Naive thymus-derived CD4-positive, alpha-beta T cell (primary cell): ENCODE measurements at regions of chr19 and their contacts with region 1.

Region 1: GRCh38 chr19:4638828-4639530 is at the start of gene TNFAIP8L1:
- DNase-seq: peak; percentile 97 to 100 (median 99)
- ATAC-seq: peak; percentile 97
- H3K4me3 ChIP-seq: peak within 1 kb of the TSS; percentile 81
- H3K4me3 Mint-ChIP-seq: peak within 1 kb of the TSS; percentile 90 to 99 (median 96)
- H3K27ac ChIP-seq: peak within 1 kb of the TSS; percentile 92
- H3K27ac Mint-ChIP-seq: peak within 1 kb of the TSS; percentile 92 to 99 (median 97)
- H3K4me1 ChIP-seq: peaks cover 27 to 32% of the 10 kb centered on the region in 2 donors
- H3K4me1 Mint-ChIP-seq: peaks cover 15 to 43% (median 32%) of the 10 kb centered on the region in 7 donors
- H3K27me3 ChIP-seq: no peaks in the 10 kb centered on the region
- H3K27me3 Mint-ChIP-seq: no peaks in the 10 kb centered on the region
- total RNA-seq, gene TNFAIP8L1: 11.2 to 22.4 (median 20.6) TPM

Region 2: DNA sequence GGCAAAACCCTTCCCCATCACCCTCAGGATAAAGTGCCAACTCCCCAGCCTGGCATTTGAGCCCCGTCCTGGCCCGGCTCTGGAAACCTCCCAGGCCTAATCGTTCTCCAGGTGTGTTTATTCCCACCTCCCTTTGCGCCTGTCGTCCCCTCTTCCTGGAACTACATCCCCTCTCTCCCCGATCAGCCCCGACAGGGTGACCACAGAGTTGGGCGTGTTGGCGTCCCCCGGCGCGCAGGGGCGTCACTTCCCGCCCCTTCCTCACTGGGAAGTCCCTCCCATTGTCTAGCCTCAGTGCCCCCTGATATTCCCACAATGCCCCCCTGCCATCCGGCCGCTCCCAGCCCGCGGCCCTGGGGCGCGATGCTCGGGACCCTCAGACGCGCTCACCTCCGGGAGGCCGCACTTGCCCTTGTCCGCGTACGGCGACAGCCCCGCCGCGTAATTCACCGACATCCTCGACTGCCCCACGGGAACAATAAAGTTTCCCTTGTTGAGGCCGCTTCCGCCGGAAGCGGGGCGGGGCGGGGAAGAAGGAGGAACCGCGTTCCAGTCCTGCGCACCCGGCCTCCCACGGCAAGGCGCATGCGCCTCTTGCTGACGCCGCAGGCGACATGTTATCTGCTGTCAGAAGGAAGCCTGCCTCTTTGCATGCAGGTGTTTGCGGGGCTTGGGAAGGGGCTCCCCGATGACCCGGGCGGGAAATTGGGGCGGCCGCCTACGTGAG is 456.7 kb before region 1 on chr19 and contains the starts of genes ANKRD24 and SIRT6:
- CTCF ChIA-PET with region 1: no interaction called
- POLR2A ChIA-PET with region 1: no interaction called
- intact Hi-C with region 1: loop called in 1 of 2 experiments (anchors 5 kb)
- DNase-seq: peak; percentile 91 to 97 (median 96)
- ATAC-seq: peak; percentile 90
- H3K4me3 ChIP-seq: peak within 1 kb of the TSS; percentile 90
- H3K4me3 Mint-ChIP-seq: peak within 1 kb of the TSS; percentile 92 to 99 (median 96)
- H3K27ac ChIP-seq: peak within 1 kb of the TSS; percentile 86
- H3K27ac Mint-ChIP-seq: peak within 1 kb of the TSS; percentile 92 to 98 (median 95)
- H3K4me1 ChIP-seq: peaks cover 14 to 15% of the 10 kb centered on the region in 2 donors
- H3K4me1 Mint-ChIP-seq: peaks cover 25 to 44% (median 39%) of the 10 kb centered on the region in 7 donors
- H3K27me3 ChIP-seq: no peaks in the 10 kb centered on the region
- H3K27me3 Mint-ChIP-seq: peaks cover 0 to 2% (median 0%) of the 10 kb centered on the region in 5 donors
- total RNA-seq, gene ANKRD24: 0.75 to 2.8 (median 2.4) TPM
- total RNA-seq, gene SIRT6: 20.0 to 41.2 (median 26.0) TPM

Region 3: GRCh38 chr19:4457654-4458395 is 181.2 kb before region 1 on chr19 and contains the start of gene UBXN6:
- CTCF ChIA-PET with region 1: interaction called, 3 read pairs
- POLR2A ChIA-PET with region 1: no interaction called
- intact Hi-C with region 1: loop called in 1 of 2 experiments (anchors 5 kb)
- DNase-seq: peak; percentile 92 to 99 (median 96)
- ATAC-seq: peak; percentile 99
- H3K4me3 ChIP-seq: peak within 1 kb of the TSS; percentile 64
- H3K4me3 Mint-ChIP-seq: peak within 1 kb of the TSS; percentile 83 to 98 (median 89)
- H3K27ac ChIP-seq: peak within 1 kb of the TSS; percentile 83
- H3K27ac Mint-ChIP-seq: peak within 1 kb of the TSS; percentile 89 to 97 (median 93)
- H3K4me1 ChIP-seq: peaks cover 10% of the 10 kb centered on the region in 2 donors
- H3K4me1 Mint-ChIP-seq: peaks cover 9 to 25% (median 16%) of the 10 kb centered on the region in 7 donors
- H3K27me3 ChIP-seq: no peaks in the 10 kb centered on the region
- H3K27me3 Mint-ChIP-seq: no peaks in the 10 kb centered on the region
- total RNA-seq, gene UBXN6: 49.2 to 68.6 (median 53.1) TPM

Region 4: GRCh38 chr19:4567584-4568071 is 71.4 kb before region 1 on chr19:
- CTCF ChIA-PET with region 1: interaction called, 40 read pairs
- POLR2A ChIA-PET with region 1: no interaction called
- intact Hi-C with region 1: loop called (anchors 1 kb)
- DNase-seq: peak; percentile 33 to 68 (median 53)
- ATAC-seq: peak; percentile 71
- H3K4me3 ChIP-seq: no peak overlapping the region
- H3K4me3 Mint-ChIP-seq: no peak overlapping the region
- H3K27ac ChIP-seq: no peak overlapping the region
- H3K27ac Mint-ChIP-seq: no peak overlapping the region
- H3K4me1 ChIP-seq: no peaks in the 10 kb centered on the region
- H3K4me1 Mint-ChIP-seq: peaks cover 0 to 2% (median 0%) of the 10 kb centered on the region in 7 donors
- H3K27me3 ChIP-seq: no peaks in the 10 kb centered on the region
- H3K27me3 Mint-ChIP-seq: peaks cover 0 to 10% (median 0%) of the 10 kb centered on the region in 5 donors

Region 5: DNA sequence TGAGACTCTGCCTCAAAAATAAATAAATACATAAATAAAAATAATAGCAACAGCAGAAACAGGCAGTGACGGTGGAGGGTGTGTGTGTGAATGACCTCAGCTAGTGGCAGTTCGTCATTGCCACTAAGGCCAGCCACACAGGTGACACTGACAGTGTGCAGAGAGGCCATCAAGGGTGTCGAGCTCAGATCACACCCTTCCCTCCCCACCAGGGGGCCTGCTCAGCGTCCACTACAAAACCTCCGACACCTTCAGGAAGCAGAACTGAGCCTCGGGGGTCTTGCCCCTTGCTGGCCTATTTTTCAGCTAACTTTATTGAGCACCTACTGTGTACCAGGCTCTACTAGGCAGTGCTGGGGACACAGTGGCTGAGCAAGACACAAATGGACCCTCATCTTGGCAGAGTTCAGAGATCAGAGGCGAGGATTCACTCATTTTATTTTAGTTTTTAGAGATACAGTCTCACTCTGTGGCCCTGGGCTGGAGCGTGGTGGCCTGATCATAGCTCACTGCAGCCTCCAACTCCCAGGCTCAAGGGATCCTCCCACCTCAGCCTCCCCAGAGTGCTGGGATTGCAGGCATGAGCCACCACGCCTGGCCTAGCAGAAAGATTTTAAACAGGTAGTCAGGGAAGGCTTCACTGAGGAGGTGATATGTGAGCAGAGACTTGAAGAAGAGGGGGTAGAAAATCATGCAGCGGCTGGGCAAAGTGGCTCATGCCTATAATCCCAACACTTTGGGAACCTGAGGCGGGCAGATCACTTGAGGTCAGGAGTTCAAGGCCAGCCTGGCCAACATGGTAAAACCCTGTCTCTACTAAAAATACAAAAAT is 49.2 kb before region 1 on chr19:
- CTCF ChIA-PET with region 1: interaction called, 5 read pairs
- POLR2A ChIA-PET with region 1: no interaction called
- intact Hi-C with region 1: loop called in 1 of 2 experiments (anchors 1 kb)
- DNase-seq: no peak
- ATAC-seq: peak; percentile 61
- H3K4me3 ChIP-seq: no peak overlapping the region
- H3K4me3 Mint-ChIP-seq: no peak overlapping the region
- H3K27ac ChIP-seq: no peak overlapping the region
- H3K27ac Mint-ChIP-seq: no peak overlapping the region
- H3K4me1 ChIP-seq: no peaks in the 10 kb centered on the region
- H3K4me1 Mint-ChIP-seq: peaks cover 0 to 10% (median 0%) of the 10 kb centered on the region in 7 donors
- H3K27me3 ChIP-seq: peaks cover 5 to 9% of the 10 kb centered on the region in 2 donors
- H3K27me3 Mint-ChIP-seq: peaks cover 45 to 58% (median 53%) of the 10 kb centered on the region in 5 donors

Region 6: GRCh38 chr19:4723367-4724187 is 84.6 kb after region 1 on chr19 and contains the start of gene DPP9:
- CTCF ChIA-PET with region 1: no interaction called
- POLR2A ChIA-PET with region 1: no interaction called
- intact Hi-C with region 1: loop called (anchors 1 to 2 kb)
- DNase-seq: peak; percentile 84 to 100 (median 99)
- ATAC-seq: peak; percentile 99
- H3K4me3 ChIP-seq: peak within 1 kb of the TSS; percentile 96
- H3K4me3 Mint-ChIP-seq: peak within 1 kb of the TSS; percentile 83 to 99 (median 95)
- H3K27ac ChIP-seq: peak within 1 kb of the TSS; percentile 87
- H3K27ac Mint-ChIP-seq: peak within 1 kb of the TSS; percentile 93 to 100 (median 98)
- H3K4me1 ChIP-seq: peaks cover 19 to 26% of the 10 kb centered on the region in 2 donors
- H3K4me1 Mint-ChIP-seq: peaks cover 21 to 48% (median 37%) of the 10 kb centered on the region in 7 donors
- H3K27me3 ChIP-seq: no peaks in the 10 kb centered on the region
- H3K27me3 Mint-ChIP-seq: peaks cover 0 to 10% (median 5%) of the 10 kb centered on the region in 5 donors
- total RNA-seq, gene DPP9: 71.2 to 90.7 (median 81.4) TPM